ENCODE measurements at regions of chr22 and their contacts with region 1.

Region 1: DNA sequence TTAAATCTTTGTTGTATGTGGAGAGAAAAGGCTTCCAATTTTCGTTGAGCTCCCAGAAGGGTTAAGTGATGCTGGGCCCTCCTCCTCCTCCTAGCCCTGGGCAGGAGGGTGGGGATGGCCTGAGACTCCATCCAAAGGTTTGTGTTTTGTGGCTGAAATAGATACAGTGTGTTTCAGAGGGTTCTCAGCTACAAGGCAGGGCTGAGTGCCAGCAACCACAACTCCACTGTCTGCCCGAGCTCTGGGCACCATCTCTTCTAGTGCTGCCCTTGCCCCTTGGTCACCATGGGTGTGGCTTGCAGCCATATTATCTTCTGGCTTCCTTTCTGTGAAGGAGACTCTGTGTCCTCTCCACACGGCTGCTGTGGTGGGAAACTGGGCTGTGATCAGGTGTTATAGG is 47.9 kb downstream of the MED15 start:
- DNase-seq: peak in 1 of 7 donors; percentile 7
- H3K4me3 ChIP-seq: no peak overlapping the region
- H3K27ac ChIP-seq: peak overlapping the region in 1 of 5 donors; percentile 77
- H3K4me1 ChIP-seq: peaks cover 49 to 61% of the 10 kb centered on the region in 2 donors
- H3K27me3 ChIP-seq: no peaks in the 10 kb centered on the region
- CTCF ChIP-seq: no peak
- POLR2A ChIP-seq: no peak

Region 2: GRCh38 chr22:20205964-20206708 is 349.1 kb before region 1 on chr22:
- intact Hi-C with region 1: no loop called
- DNase-seq: peak; percentile 32 to 74 (median 51)
- H3K4me3 ChIP-seq: peak overlapping the region in 2 of 4 donors; percentile 18 to 48
- H3K27ac ChIP-seq: peak overlapping the region in 3 of 5 donors; percentile 18 to 74 (median 52)
- H3K4me1 ChIP-seq: peaks cover 14 to 23% of the 10 kb centered on the region in 2 donors
- H3K27me3 ChIP-seq: no peaks in the 10 kb centered on the region
- CTCF ChIP-seq: peak in 3 of 6 experiments; percentile 10 to 29 (median 28)
- POLR2A ChIP-seq: peak in 1 of 2 donors; percentile 19

Region 3: GRCh38 chr22:20523086-20523983 is 31.9 kb before region 1 on chr22:
- intact Hi-C with region 1: loop called (anchors 5 to 10 kb)
- DNase-seq: peak in 2 of 7 donors; percentile 36 to 49
- H3K4me3 ChIP-seq: no peak overlapping the region
- H3K27ac ChIP-seq: peak overlapping the region in 4 of 5 donors; percentile 0 to 71 (median 67)
- H3K4me1 ChIP-seq: peaks cover 44 to 59% of the 10 kb centered on the region in 2 donors
- H3K27me3 ChIP-seq: no peaks in the 10 kb centered on the region
- CTCF ChIP-seq: no peak
- POLR2A ChIP-seq: no peak

Region 4: DNA sequence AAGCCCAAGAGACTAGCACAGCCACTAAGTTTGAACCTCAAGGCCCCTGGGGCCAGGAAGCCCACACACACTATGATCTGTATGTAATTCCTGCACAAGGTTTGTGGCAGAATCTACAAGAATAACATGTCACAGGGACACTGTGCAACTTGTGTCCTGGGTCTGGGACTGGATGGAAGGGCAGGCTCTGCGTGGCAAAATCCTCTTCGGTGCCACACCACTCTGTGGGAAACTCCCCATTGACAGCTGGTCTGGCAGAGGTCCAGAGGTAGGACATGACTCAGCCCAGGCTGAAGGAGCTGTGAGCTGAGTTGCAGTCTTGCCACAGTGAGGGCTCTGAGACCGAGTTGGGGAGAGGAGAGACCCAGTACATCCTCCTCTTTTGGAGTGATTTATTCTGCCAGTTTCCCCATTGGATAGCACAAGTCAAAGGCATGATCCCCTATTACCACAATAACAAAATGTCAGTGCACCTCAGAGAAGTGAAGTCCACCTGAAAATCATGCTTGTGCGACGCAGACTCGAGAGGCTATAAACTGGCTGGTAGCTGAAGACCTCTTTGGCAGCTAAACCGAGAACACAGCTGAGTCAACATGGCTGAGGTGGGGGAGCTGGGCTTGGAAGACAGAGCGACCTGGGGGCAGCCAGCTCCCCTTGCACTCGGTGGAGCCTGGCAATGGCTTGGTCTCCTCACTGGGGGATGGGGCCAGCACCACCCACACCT is 195.3 kb after region 1 on chr22:
- intact Hi-C with region 1: no loop called
- DNase-seq: peak; percentile 74 to 89 (median 87)
- H3K4me3 ChIP-seq: no peak overlapping the region
- H3K27ac ChIP-seq: peak overlapping the region in 1 of 5 donors; percentile 45
- H3K4me1 ChIP-seq: peaks cover 0 to 10% of the 10 kb centered on the region in 2 donors
- H3K27me3 ChIP-seq: no peaks in the 10 kb centered on the region
- CTCF ChIP-seq: no peak
- POLR2A ChIP-seq: no peak

Measured in adrenal gland (tissue), 19 donors.